ENCODE measurements at regions of chr10 and their contacts with region 1.

Region 1: DNA sequence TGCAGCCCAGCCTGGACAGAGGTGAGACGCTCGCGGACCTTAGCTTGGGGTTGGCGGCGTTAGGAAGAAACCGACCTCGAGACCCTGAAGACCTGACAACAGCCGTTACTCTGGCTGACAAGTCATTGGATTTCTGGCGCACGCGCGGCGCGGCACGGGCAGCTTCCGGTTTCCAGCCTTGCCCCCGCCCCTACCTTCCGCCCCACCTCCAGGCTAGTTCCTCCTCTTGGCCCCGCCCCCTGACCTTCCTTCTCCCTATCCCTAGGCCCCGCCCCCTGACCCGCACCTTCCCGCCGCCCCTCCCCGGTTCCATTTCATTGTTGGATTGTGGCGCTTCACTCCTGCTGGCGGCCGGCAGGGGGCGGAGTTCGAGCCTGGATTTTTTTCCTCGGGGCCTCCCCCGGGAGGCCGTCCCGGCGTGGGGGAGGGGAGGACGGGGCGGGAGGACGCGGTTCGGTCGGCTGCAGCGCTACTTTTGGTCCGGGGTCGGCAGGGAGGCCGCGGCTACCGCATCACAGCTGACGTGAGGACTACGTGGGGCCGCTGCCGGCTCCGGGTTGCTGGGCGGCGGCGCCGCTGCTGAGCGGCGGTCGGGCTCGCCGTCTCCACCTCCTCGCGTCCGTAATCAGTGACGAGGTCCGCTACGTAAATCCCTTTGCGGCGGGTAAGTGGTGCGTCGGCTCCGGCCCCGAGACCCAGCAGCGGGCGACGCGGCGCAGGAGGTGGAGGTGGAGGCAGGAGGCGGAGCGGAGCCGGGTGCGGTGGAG is at the start of gene CREM:
- DNase-seq: peak; percentile 97
- H3K4me3 Mint-ChIP-seq: peak within 1 kb of the TSS; percentile 94
- H3K27ac Mint-ChIP-seq: peak within 1 kb of the TSS; percentile 93
- H3K4me1 Mint-ChIP-seq: peaks cover 66% of the 10 kb centered on the region
- H3K27me3 Mint-ChIP-seq: no peaks in the 10 kb centered on the region
- total RNA-seq, gene CREM: 101 and 106 TPM in 2 replicates

Region 2: GRCh38 chr10:35090162-35090954 is 36.4 kb before region 1 on chr10 and contains the start of gene CUL2:
- intact Hi-C with region 1: loop called (anchors 1 kb)
- DNase-seq: peak; percentile 90
- H3K4me3 Mint-ChIP-seq: peak within 1 kb of the TSS; percentile 98
- H3K27ac Mint-ChIP-seq: peak within 1 kb of the TSS; percentile 99
- H3K4me1 Mint-ChIP-seq: peaks cover 38% of the 10 kb centered on the region
- H3K27me3 Mint-ChIP-seq: peaks cover 9% of the 10 kb centered on the region
- total RNA-seq, gene CUL2: 49.8 and 50.5 TPM in 2 replicates

Region 3: DNA sequence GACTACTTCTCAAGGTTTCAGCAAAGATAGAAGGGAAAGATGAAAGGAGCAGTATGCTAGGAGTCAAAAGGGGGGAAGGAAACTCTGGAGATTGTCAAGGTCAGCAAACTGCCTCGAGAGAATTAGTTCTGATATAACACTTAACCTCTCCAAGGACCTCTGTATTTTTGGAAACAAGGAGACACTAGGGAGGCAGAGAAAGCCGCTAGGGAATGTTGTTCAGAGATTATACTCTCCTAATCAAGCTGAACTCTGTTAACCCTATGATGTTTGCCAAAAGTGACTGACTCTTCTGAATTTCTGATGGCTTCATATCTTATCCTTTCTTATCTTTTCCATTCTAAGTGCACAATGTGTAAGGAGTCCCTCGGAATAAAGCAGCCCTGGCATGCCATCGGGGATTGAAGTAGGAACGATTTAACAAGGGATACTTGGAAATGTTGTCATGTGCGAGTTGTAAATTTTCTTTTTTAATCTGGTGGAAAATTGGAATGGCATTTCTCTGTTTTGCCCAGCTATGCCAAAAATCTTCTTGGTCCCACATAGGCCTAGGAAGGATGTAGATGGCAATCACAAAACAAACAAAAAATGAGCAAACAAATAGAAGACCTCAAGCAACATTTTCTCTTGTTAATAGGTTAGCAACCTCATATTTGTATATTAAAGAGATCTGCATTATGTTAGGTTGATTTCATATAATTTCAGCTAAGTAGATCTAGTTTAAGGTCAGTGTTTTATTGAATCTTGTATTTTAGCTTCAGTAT is 27.2 kb after region 1 on chr10:
- intact Hi-C with region 1: loop called (anchors 1 kb)
- DNase-seq: no peak
- H3K4me3 Mint-ChIP-seq: no peak overlapping the region
- H3K27ac Mint-ChIP-seq: no peak overlapping the region
- H3K4me1 Mint-ChIP-seq: peaks cover 44% of the 10 kb centered on the region
- H3K27me3 Mint-ChIP-seq: no peaks in the 10 kb centered on the region

Region 4: GRCh38 chr10:35208536-35208935 is 81.8 kb after region 1 on chr10:
- intact Hi-C with region 1: loop called (anchors 2 kb)
- DNase-seq: peak; percentile 60
- H3K4me3 Mint-ChIP-seq: peak overlapping the region; percentile 75
- H3K27ac Mint-ChIP-seq: peak overlapping the region; percentile 94
- H3K4me1 Mint-ChIP-seq: peaks cover 61% of the 10 kb centered on the region
- H3K27me3 Mint-ChIP-seq: no peaks in the 10 kb centered on the region

Region 5: GRCh38 chr10:35218339-35218955 is 91.7 kb after region 1 on chr10:
- intact Hi-C with region 1: loop called (anchors 1 kb)
- DNase-seq: peak; percentile 73
- H3K4me3 Mint-ChIP-seq: peak overlapping the region; percentile 74
- H3K27ac Mint-ChIP-seq: peak overlapping the region; percentile 95
- H3K4me1 Mint-ChIP-seq: peaks cover 61% of the 10 kb centered on the region
- H3K27me3 Mint-ChIP-seq: no peaks in the 10 kb centered on the region

Region 6: GRCh38 chr10:35442028-35442427 is 315.3 kb after region 1 on chr10:
- intact Hi-C with region 1: loop called (anchors 5 kb)
- DNase-seq: no peak
- H3K4me3 Mint-ChIP-seq: no peak overlapping the region
- H3K27ac Mint-ChIP-seq: peak overlapping the region; percentile 79
- H3K4me1 Mint-ChIP-seq: peaks cover 36% of the 10 kb centered on the region
- H3K27me3 Mint-ChIP-seq: peaks cover 2% of the 10 kb centered on the region

Region 7: GRCh38 chr10:35642027-35642792 is 515.5 kb after region 1 on chr10 and contains the start of gene FZD8:
- intact Hi-C with region 1: loop called (anchors 1 kb)
- DNase-seq: peak; percentile 54
- H3K4me3 Mint-ChIP-seq: peak within 1 kb of the TSS; percentile 83
- H3K27ac Mint-ChIP-seq: no peak within 1 kb of the TSS
- H3K4me1 Mint-ChIP-seq: peaks cover 14% of the 10 kb centered on the region
- H3K27me3 Mint-ChIP-seq: peaks cover 67% of the 10 kb centered on the region
- total RNA-seq, gene FZD8: 0.41 and 0.56 TPM in 2 replicates